GM10248 (cell line): ENCODE measurements at regions of chr11 and their contacts with region 1.

Region 1: DNA sequence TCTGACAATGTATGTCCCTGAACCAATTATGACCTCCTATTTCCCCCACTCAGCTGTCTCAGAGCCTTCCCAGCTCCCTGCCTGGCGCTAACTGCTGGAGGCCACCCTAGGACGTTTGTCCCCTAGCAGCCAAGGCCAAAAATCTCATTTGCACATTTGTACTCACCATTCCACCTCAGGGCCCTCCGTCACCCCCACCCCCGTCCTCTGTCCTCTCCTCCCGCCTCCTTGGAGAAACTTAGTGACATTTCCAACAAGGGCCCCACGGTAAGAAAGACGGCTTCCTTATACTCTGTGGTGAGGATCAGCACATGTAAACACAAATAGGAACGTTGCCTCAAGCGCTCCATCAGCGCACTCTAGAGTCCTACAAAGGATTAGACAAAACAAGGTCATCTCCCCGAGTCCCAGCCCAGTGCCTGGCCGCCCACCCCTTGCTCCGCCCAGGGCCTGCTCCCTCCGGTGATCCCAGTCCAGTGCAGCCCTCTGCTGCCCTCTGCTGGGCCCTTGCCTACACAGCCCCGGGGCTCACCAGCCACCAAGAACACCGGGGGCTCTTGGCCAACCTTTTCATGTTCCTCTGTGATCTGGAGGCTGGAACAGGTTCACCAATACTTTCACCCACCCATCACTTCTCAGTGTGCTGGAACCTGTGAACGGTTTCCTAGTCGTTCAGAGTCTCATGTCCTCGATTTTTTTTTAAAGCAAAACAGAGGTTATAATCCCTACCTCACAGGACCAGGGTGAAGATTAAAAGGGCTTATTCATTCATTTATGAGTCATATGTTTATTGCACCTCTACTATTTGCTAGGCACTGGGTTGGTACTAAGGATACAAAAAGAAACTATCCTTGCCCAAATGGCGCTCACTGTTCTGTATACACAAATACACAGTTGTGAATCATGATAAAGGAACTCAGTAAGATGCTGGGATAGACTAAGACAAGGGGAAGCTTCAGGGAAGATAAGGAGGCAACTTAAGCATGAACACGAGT is 15.3 kb upstream of the CTR9 start:
- DNase-seq: peak; percentile 91
- CTCF ChIP-seq: peak; percentile 91

Region 2: DNA sequence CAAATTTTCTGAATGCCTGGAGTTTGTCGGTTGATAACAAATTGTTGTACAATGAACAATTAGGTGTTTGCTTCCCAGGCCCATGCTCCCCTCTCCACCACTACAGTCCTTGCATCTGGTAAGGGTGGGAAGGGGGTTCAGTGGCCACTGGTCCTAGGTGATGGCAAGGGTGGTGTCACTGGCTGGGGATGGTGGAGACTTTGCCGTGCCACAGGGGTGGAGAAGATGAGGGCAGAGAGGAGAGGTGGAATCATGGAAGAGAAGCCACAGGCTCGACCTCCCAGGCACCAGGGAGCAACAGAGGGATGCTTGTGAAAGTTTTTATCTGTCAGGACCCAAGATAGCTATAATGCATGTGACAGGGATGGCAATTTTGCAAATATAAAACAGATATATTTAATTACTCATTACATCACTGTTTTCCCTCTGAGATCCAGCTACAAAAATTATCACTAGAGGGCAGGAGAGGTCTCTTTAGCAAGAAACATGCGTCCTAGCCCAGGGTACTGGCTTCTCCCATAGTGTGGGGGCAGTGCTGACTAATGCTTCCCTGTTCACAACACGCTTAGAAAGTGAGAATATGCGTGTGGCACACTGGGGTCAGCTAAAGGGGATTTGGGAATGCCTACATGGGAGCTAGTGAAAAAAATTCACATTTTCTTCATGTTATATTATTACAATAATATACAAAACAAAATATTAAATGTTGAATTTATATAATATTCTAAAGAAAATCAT is 329.8 kb before region 1 on chr11:
- CTCF ChIA-PET with region 1: interaction called, 42 read pairs
- POLR2A ChIA-PET with region 1: no interaction called
- DNase-seq: peak; percentile 63
- CTCF ChIP-seq: peak; percentile 56

Region 3: DNA sequence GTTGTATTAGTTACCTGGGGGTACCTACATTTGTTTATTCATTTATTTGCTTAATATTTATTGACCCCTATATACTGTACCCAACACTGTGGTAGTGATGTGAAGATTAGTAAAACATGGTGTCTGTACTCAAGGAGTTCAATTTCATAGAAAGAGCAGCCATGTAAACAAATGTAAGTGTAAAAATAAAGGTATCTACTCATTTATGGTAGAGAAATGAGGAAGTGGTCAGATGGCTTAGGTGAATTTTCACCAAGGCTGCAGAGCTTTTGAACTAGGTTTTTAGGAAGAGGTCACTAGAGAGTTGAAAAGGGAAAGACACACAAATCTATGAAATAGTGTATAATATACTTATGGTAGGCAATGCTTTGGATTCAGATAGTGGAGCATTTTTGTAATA is 26.4 kb after region 1 on chr11:
- CTCF ChIA-PET with region 1: no interaction called
- POLR2A ChIA-PET with region 1: no interaction called
- DNase-seq: peak; percentile 53
- CTCF ChIP-seq: no peak